Psoas muscle (tissue), 8 donors: ENCODE measurements at regions of chr4 and their contacts with region 1.

Region 1: DNA sequence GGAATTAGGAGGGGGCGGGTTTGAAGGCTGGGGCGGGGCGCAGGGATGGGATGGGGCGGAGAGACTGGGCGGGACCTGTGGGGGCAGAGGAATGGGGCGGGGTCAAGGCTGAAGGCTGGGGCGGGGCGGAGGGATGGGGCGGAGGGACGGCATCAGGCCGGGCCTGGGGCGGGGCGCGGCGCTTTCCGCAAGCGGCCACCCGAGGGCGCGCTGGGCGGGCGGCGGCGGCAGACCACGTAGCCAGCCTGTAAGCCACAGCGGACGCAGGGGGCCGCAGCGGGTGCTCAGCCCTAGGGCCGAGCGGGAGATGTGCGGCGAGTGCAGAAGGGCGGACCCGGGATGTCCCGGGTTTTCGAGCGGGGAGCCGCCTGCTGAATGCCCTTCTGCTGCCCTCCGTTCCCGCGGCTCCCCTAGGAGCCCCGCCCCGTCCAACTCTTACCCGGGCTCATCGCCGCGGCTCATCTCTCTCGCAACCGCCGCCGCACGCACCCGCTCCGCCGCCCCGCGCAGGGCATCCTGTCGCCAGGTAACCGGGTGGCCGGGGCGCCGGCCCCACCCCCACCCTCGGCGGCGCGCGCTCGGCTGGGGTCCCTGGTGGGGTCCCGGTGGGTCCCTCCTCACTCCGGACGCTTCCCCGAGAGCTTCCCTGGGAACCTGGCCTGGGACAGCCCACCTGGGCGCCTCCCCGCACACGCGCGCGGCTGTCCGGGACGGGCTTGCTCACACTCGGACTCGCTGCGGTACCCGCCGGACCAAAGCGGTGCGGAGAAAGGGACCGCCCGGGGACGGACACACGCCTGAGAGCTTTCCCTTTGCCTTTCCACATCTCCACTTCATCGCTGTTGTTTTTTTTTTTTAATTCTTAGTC is at the start of gene CCDC110:
- DNase-seq: peak; percentile 93 to 97
- ATAC-seq: peak; percentile 93 to 98 (median 96)
- H3K4me3 ChIP-seq: peak within 1 kb of the TSS; percentile 77
- H3K27ac ChIP-seq: peak within 1 kb of the TSS; percentile 83
- H3K4me1 ChIP-seq: no peaks in the 10 kb centered on the region
- H3K27me3 ChIP-seq: no peaks in the 10 kb centered on the region
- CTCF ChIP-seq: peak; percentile 74
- total RNA-seq, gene CCDC110: 0.54 to 7.0 (median 3.2) TPM

Region 2: GRCh38 chr4:185425647-185426352 is 45.7 kb before region 1 on chr4 and contains the start of gene UFSP2:
- intact Hi-C with region 1: loop called (anchors 5 kb)
- DNase-seq: peak; percentile 89 to 95
- ATAC-seq: peak; percentile 95 to 97 (median 96)
- H3K4me3 ChIP-seq: peak within 1 kb of the TSS; percentile 96
- H3K27ac ChIP-seq: peak within 1 kb of the TSS; percentile 96
- H3K4me1 ChIP-seq: peaks cover 35% of the 10 kb centered on the region
- H3K27me3 ChIP-seq: no peaks in the 10 kb centered on the region
- CTCF ChIP-seq: no peak
- total RNA-seq, gene UFSP2: 32.1 to 45.5 (median 41.4) TPM

Region 3: GRCh38 chr4:185591679-185592141 is 120.2 kb after region 1 on chr4:
- intact Hi-C with region 1: loop called (anchors 2 to 5 kb)
- DNase-seq: no peak
- ATAC-seq: peak in 3 of 4 donors; percentile 31 to 49 (median 40)
- H3K4me3 ChIP-seq: peak overlapping the region; percentile 16
- H3K27ac ChIP-seq: peak overlapping the region; percentile 75
- H3K4me1 ChIP-seq: peaks cover 28% of the 10 kb centered on the region
- H3K27me3 ChIP-seq: no peaks in the 10 kb centered on the region
- CTCF ChIP-seq: no peak

Region 4: DNA sequence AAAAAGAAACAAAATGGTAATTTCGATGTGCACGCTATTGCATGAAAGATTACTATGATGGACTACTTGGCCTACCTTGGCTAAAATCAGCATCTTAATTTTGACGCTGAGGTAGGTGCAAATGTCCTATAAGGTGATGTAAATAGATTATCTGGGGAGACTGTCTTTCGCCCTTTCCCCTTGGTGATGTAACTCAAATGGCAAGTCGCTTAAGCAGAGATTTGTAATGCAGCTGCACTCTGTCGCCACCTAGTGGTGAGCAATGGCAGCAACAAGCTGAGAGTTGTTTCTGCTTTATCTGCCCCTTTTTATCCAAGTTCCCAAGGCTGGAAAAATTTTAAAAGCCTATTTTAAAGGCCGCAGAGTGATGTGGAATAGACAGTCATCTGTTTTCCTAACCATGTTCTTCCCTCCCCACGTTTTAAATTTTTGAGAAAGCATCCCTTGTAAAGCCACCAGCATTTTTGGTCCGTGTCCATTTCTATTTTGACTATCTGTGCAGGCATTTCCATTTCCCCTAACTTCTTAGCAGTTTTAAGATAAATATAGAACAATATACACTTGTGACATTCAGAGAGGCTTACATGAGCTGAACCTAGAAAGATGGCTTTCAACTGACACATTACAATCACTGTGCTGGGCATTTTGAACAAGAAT is 126.2 kb after region 1 on chr4:
- intact Hi-C with region 1: loop called (anchors 2 to 5 kb)
- DNase-seq: peak; percentile 73 to 85
- ATAC-seq: peak; percentile 73 to 86 (median 78)
- H3K4me3 ChIP-seq: no peak overlapping the region
- H3K27ac ChIP-seq: peak overlapping the region; percentile 42
- H3K4me1 ChIP-seq: peaks cover 8% of the 10 kb centered on the region
- H3K27me3 ChIP-seq: no peaks in the 10 kb centered on the region
- CTCF ChIP-seq: peak; percentile 100

Region 5: DNA sequence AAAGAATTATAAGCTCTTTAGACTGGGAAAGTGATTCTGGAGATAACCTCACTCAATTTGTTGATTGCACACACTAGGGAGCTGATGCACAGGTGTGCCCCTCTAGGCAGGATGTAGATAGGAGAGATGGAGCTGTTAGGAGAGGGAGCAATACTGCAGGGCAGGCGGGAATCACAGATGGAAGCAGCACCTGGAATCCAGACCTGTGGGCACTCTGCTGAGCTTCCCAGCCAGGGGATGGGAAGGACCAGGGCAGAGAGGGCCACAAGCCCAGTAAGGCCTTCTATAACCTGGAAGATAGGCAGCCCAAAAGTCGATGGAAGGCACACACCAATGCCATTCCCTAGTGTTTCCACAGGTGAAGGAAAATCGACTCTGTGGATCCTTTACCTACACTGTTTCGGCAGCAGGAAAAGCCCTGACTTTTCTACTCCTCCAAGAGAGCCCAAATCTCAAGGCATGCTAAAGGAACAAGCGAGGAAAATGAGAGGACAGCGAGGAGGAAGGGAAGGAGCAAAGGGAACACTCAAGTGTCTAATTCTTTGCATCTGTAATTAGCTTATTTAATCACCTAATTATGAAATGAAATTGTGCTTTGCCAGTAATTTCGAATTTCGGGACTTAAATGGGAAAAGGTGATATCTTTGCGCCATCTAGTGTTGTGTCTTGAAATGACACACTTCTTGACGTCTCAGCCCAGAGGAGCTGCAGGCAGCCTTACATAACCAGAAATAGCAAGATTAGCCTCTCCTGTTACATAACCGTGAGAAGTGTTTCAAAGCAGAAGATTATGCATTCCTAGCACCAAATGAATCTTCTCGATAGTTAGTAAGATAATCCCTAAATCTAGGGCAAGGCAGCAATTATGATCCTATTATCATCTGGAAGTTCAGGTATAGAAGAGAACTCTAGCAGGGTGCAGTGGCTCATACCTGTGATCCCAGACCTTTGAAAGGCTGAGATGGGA is 566.5 kb after region 1 on chr4:
- intact Hi-C with region 1: loop called in 1 of 2 experiments (anchors 5 kb)
- DNase-seq: no peak
- ATAC-seq: peak; percentile 73 to 95 (median 81)
- H3K4me3 ChIP-seq: no peak overlapping the region
- H3K27ac ChIP-seq: no peak overlapping the region
- H3K4me1 ChIP-seq: no peaks in the 10 kb centered on the region
- H3K27me3 ChIP-seq: no peaks in the 10 kb centered on the region
- CTCF ChIP-seq: peak; percentile 90